MCF 10A (cell line): ENCODE measurements at regions of chr17 and their contacts with region 1.

Region 1: GRCh38 chr17:48892940-48893645 is 506 bp downstream of the ATP5MC1 start:
- DNase-seq: no peak
- H3K4me3 Mint-ChIP-seq: peak overlapping the region; percentile 99
- H3K27ac Mint-ChIP-seq: peak overlapping the region; percentile 95
- H3K4me1 Mint-ChIP-seq: no peaks in the 10 kb centered on the region
- H3K27me3 Mint-ChIP-seq: no peaks in the 10 kb centered on the region
- CTCF ChIP-seq: no peak

Region 2: DNA sequence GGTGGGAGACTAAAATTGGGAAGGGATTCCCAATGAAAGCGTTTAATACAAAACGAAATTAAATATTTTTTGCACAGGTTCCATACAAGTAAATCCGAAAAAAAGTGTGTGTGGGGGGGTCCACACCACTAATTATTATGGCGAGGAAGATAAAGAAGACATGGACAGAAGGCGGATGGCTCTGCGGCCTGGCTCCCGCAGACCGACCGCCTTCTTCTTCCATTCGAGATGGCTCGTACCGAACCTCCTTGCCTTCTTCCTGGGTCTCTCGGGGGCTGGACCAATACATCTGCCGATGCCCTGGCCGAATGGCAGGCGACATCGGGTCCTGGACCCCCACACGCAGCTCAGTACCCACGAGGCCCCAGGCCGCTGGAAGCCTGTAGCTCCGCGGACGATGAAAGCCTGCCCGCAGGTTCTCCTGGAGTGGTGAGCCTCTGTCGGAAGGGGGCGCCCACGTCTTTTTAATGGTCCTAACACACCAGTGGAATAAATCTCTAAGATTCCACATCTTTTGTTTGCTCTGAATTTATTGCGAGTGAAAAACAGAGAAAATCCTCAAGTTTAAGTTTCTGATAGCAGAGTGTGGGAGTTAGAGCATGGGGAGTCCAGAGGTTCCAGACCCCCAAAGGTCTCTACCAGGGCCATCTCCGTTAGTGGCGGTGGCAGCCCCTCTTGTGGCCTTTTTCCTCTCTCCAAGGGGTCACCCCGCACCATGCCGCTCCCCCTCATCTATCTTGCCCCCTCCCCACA is 168.7 kb before region 1 on chr17:
- CTCF ChIA-PET with region 1: interaction called, 18 read pairs
- POLR2A ChIA-PET with region 1: no interaction called
- intact Hi-C with region 1: no loop called
- DNase-seq: peak; percentile 78
- H3K4me3 Mint-ChIP-seq: peak overlapping the region; percentile 17
- H3K27ac Mint-ChIP-seq: no peak overlapping the region
- H3K4me1 Mint-ChIP-seq: peaks cover 11% of the 10 kb centered on the region
- H3K27me3 Mint-ChIP-seq: peaks cover 56% of the 10 kb centered on the region
- CTCF ChIP-seq: peak; percentile 74

Region 3: GRCh38 chr17:48908047-48908843 is 15.2 kb after region 1 on chr17 and contains the start of gene UBE2Z:
- CTCF ChIA-PET with region 1: interaction called, 9 read pairs
- POLR2A ChIA-PET with region 1: interaction called, 155 read pairs
- intact Hi-C with region 1: loop called (anchors 1 kb)
- DNase-seq: peak; percentile 93
- H3K4me3 Mint-ChIP-seq: peak within 1 kb of the TSS; percentile 93
- H3K27ac Mint-ChIP-seq: peak within 1 kb of the TSS; percentile 95
- H3K4me1 Mint-ChIP-seq: peaks cover 32% of the 10 kb centered on the region
- H3K27me3 Mint-ChIP-seq: no peaks in the 10 kb centered on the region
- CTCF ChIP-seq: no peak
- total RNA-seq, gene UBE2Z: 106 and 115 TPM in 2 replicates

Region 4: GRCh38 chr17:48915459-48916282 is 22.6 kb after region 1 on chr17:
- CTCF ChIA-PET with region 1: interaction called, 3 read pairs
- POLR2A ChIA-PET with region 1: interaction called, 155 read pairs
- intact Hi-C with region 1: no loop called
- DNase-seq: peak; percentile 94
- H3K4me3 Mint-ChIP-seq: peak overlapping the region; percentile 68
- H3K27ac Mint-ChIP-seq: peak overlapping the region; percentile 98
- H3K4me1 Mint-ChIP-seq: peaks cover 39% of the 10 kb centered on the region
- H3K27me3 Mint-ChIP-seq: no peaks in the 10 kb centered on the region
- CTCF ChIP-seq: no peak